ENCODE measurements at regions of chr19 and their contacts with region 1.

Region 1: GRCh38 chr19:38402967-38403861 is at the start of gene FAM98C:
- DNase-seq: peak; percentile 99
- H3K4me3 Mint-ChIP-seq: peak within 1 kb of the TSS; percentile 95
- H3K27ac Mint-ChIP-seq: peak within 1 kb of the TSS; percentile 95
- H3K4me1 Mint-ChIP-seq: peaks cover 12% of the 10 kb centered on the region
- H3K27me3 Mint-ChIP-seq: peaks cover 2% of the 10 kb centered on the region
- total RNA-seq, gene FAM98C: 25.3 and 30.4 TPM in 2 replicates

Region 2: GRCh38 chr19:38425810-38426466 is 22.7 kb after region 1 on chr19 and contains the start of gene RASGRP4:
- intact Hi-C with region 1: loop called (anchors 2 kb)
- DNase-seq: peak; percentile 75
- H3K4me3 Mint-ChIP-seq: peak within 1 kb of the TSS; percentile 52
- H3K27ac Mint-ChIP-seq: peak within 1 kb of the TSS; percentile 86
- H3K4me1 Mint-ChIP-seq: peaks cover 27% of the 10 kb centered on the region
- H3K27me3 Mint-ChIP-seq: peaks cover 2% of the 10 kb centered on the region
- total RNA-seq, gene RASGRP4: 2.1 and 2.2 TPM in 2 replicates

Region 3: DNA sequence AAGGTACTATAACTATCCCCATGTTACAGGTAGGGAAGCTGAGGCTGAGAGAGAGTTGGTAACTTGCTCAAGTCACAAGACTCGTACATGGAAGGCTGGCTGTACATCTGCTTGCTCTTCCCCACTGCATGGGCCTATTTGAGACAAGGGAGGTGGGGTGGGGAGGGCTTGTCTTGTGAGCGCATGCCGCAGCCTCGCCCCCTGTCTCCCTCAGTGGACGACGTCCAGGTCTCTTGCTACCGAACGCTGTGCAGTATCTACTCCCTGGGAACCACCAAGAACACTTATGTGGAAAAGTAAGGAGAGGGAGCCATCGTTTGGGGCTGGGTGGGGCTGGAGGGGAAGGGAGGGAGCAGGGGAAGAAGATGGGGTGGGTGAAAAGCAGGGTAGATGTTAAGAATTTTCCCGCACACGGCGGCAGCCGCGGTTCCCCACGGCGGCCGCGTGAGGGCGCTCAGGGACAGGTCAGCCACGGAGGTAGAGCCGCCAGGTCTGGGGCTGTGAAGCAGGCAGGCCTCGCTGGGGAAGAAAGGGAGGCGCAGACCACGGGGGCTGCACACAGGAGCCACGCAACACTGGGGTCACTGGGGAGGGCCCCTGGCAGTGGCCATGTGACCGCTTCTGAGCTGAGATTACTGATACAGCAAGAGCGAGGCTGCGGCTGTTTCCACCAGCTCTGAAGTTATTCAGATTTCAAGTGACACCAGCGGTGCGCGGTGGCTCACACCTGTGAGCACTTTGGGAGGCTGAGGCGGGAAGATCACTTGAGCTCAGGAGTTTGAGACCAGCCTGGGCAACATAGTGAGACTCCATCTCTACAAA is 111.8 kb after region 1 on chr19:
- intact Hi-C with region 1: loop called (anchors 1 kb)
- DNase-seq: peak; percentile 94
- H3K4me3 Mint-ChIP-seq: peak overlapping the region; percentile 26
- H3K27ac Mint-ChIP-seq: no peak overlapping the region
- H3K4me1 Mint-ChIP-seq: peaks cover 22% of the 10 kb centered on the region
- H3K27me3 Mint-ChIP-seq: peaks cover 7% of the 10 kb centered on the region

Region 4: DNA sequence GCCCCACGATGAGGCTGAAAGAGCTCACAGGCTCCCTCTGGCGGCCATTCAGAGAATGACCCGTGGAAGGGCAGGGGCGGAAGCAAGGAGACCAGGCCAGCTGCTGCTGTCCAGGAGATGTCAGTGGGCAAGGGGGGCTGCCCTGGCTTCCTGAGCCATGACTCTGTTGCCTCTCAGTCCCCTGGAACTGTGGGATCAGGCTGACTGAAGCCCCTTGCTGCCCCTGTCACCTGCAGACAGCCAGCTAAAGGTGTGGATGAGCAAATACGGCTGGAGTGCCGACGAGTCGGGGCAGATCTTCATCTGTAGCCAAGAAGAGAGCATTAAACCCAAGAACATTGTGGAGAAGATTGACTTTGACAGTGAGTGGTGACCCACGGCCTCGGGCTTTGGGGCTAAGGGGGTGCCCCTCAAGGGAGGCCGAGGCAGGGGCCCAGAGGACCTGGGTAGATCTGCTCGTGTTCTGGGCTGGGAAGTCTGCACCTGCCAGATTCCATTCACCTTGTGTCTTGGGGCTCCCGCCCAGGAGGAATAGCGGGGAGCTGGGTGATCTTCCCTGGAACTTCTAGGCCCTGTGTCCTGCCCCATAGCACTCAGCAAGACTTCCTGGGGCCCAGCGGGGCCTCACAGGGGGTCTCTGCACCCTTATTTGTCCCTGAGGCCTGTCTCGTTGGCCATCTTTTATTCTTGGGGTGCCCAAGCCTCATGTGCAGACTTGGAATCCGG is 231.7 kb after region 1 on chr19:
- intact Hi-C with region 1: loop called (anchors 1 kb)
- DNase-seq: peak; percentile 94
- H3K4me3 Mint-ChIP-seq: peak overlapping the region; percentile 55
- H3K27ac Mint-ChIP-seq: peak overlapping the region; percentile 71
- H3K4me1 Mint-ChIP-seq: peaks cover 26% of the 10 kb centered on the region
- H3K27me3 Mint-ChIP-seq: no peaks in the 10 kb centered on the region

Region 5: GRCh38 chr19:38899447-38900219 is 496.4 kb after region 1 on chr19 and contains the starts of genes NFKBIB and SIRT2:
- intact Hi-C with region 1: loop called (anchors 10 kb)
- DNase-seq: peak; percentile 100
- H3K4me3 Mint-ChIP-seq: peak within 1 kb of the TSS; percentile 93
- H3K27ac Mint-ChIP-seq: peak within 1 kb of the TSS; percentile 95
- H3K4me1 Mint-ChIP-seq: peaks cover 37% of the 10 kb centered on the region
- H3K27me3 Mint-ChIP-seq: no peaks in the 10 kb centered on the region
- total RNA-seq, gene NFKBIB: 89.2 and 89.7 TPM in 2 replicates
- total RNA-seq, gene SIRT2: 23.6 and 30.1 TPM in 2 replicates

Measured in activated CD4-positive, alpha-beta T cell treated with anti-CD3 and anti-CD28 coated beads, Interleukin-2, amount 10 ng/mL, durations not matched to agents 24 days and 14 days (primary cell).